ENCODE measurements at regions of chr10 and their contacts with region 1.

Region 1: GRCh38 chr10:1661859-1662437 is 75.4 kb downstream of the ADARB2 start:
- DNase-seq: no peak
- H3K4me3 ChIP-seq: no peak overlapping the region
- H3K27ac ChIP-seq: no peak overlapping the region
- H3K4me1 ChIP-seq: no peaks in the 10 kb centered on the region
- H3K27me3 ChIP-seq: no peaks in the 10 kb centered on the region
- CTCF ChIP-seq: no peak

Region 2: GRCh38 chr10:1526144-1527050 is 135.6 kb before region 1 on chr10:
- CTCF ChIA-PET with region 1: no interaction called
- dilution Hi-C with region 1: loop called (anchors 10 kb)
- in situ Hi-C with region 1: no loop called
- intact Hi-C with region 1: no loop called
- DNase-seq: no peak
- H3K4me3 ChIP-seq: no peak overlapping the region
- H3K27ac ChIP-seq: no peak overlapping the region
- H3K4me1 ChIP-seq: no peaks in the 10 kb centered on the region
- H3K27me3 ChIP-seq: no peaks in the 10 kb centered on the region
- CTCF ChIP-seq: no peak

Region 3: DNA sequence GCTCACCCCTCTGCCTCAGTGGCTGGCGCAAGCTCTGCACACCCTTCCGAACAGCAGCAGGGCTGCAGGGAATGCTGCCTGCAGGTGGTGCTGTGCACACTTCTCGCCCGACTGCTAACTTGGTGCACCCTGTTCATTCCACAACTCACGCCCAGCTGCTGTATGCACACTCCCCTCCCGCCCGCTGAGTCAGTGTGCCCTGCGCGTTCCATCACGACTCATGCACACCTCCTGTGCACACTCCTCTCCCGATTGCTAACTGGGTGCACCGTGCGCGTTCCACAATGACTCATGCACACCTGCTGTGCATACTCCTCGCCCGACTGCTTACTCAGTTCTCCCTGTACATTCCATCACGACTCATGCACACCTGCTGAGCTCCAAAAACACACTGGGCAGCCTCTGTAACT is 53.9 kb after region 1 on chr10:
- CTCF ChIA-PET with region 1: no interaction called
- dilution Hi-C with region 1: no loop called
- in situ Hi-C with region 1: no loop called
- intact Hi-C with region 1: no loop called
- DNase-seq: peak; percentile 12
- H3K4me3 ChIP-seq: no peak overlapping the region
- H3K27ac ChIP-seq: no peak overlapping the region
- H3K4me1 ChIP-seq: no peaks in the 10 kb centered on the region
- H3K27me3 ChIP-seq: no peaks in the 10 kb centered on the region
- CTCF ChIP-seq: no peak

Region 4: GRCh38 chr10:3500408-3500856 is 1838.5 kb after region 1 on chr10:
- CTCF ChIA-PET with region 1: no interaction called
- dilution Hi-C with region 1: no loop called
- in situ Hi-C with region 1: no loop called
- intact Hi-C with region 1: no loop called
- DNase-seq: peak; percentile 60
- H3K4me3 ChIP-seq: no peak overlapping the region
- H3K27ac ChIP-seq: peak overlapping the region; percentile 39
- H3K4me1 ChIP-seq: peaks cover 6% of the 10 kb centered on the region
- H3K27me3 ChIP-seq: no peaks in the 10 kb centered on the region
- CTCF ChIP-seq: no peak

Measured in mammary epithelial cell (primary cell).